ENCODE measurements at regions of chr5 and their contacts with region 1.

Region 1: DNA sequence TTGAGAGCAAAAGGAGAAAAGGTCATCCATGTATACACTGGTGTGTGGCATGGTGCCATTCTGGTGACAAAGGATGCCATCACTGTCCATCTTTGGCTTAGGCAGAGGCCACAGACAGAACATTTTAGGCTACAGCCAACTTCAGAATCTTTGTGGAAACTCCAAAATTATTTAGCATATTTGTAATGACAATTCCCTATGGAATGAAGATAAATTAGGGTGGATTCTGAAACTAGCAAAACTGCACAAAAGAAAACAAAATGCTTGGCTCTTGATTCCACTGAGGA is 92.5 kb downstream of the FBXW11 start:
- DNase-seq: no peak
- ATAC-seq: no peak
- H3K4me3 Mint-ChIP-seq: no peak overlapping the region
- H3K27ac Mint-ChIP-seq: peak overlapping the region; percentile 83
- H3K4me1 Mint-ChIP-seq: peaks cover 44% of the 10 kb centered on the region
- H3K27me3 Mint-ChIP-seq: no peaks in the 10 kb centered on the region

Region 2: GRCh38 chr5:171681677-171682076 is 232.3 kb before region 1 on chr5:
- CTCF ChIA-PET with region 1: no interaction called
- POLR2A ChIA-PET with region 1: no interaction called
- intact Hi-C with region 1: no loop called
- DNase-seq: no peak
- ATAC-seq: no peak
- H3K4me3 Mint-ChIP-seq: no peak overlapping the region
- H3K27ac Mint-ChIP-seq: no peak overlapping the region
- H3K4me1 Mint-ChIP-seq: no peaks in the 10 kb centered on the region
- H3K27me3 Mint-ChIP-seq: peaks cover 24% of the 10 kb centered on the region

Region 3: DNA sequence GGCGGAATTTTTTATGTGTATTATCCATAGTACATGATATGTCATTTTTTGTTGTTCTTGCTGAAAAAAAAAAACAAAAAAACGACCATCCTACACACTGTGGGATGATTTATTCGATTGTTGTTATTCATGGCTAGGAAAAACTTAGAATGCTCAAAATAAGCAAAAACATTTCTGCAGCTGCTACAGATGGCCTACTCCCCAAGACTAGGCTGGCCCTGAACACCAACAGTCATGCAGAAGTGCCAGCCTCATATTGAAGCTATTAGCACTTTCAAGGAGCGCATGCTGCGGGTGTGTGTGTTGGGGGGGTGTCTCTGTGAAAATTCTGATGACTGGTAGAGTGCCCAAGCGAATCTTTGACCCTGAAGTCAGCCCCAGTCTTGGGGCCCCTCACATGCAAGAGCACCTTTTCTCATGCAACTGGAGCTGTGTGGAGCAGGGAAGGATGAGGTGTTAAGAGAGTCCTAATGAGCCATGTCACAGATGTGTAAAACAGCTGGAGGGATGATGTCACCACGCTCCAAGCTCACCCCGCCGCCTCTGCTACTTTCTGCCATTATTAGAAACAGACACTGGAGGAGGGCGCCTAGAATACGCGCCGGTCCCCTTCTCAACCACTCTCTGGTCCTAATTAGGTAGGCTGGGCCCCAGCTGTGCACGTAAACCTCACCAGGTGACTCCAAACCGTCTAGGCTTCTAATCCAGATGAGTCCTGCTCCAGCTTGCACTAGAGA is 189.3 kb before region 1 on chr5:
- CTCF ChIA-PET with region 1: no interaction called
- POLR2A ChIA-PET with region 1: no interaction called
- intact Hi-C with region 1: no loop called
- DNase-seq: no peak
- ATAC-seq: no peak
- H3K4me3 Mint-ChIP-seq: no peak overlapping the region
- H3K27ac Mint-ChIP-seq: no peak overlapping the region
- H3K4me1 Mint-ChIP-seq: peaks cover 2% of the 10 kb centered on the region
- H3K27me3 Mint-ChIP-seq: peaks cover 15% of the 10 kb centered on the region

Region 4: GRCh38 chr5:171898386-171898785 is 15.5 kb before region 1 on chr5:
- CTCF ChIA-PET with region 1: interaction called, 16 read pairs
- POLR2A ChIA-PET with region 1: no interaction called
- intact Hi-C with region 1: no loop called
- DNase-seq: no peak
- ATAC-seq: no peak
- H3K4me3 Mint-ChIP-seq: no peak overlapping the region
- H3K27ac Mint-ChIP-seq: no peak overlapping the region
- H3K4me1 Mint-ChIP-seq: peaks cover 50% of the 10 kb centered on the region
- H3K27me3 Mint-ChIP-seq: no peaks in the 10 kb centered on the region

Region 5: GRCh38 chr5:171999877-172000276 is 85.9 kb after region 1 on chr5:
- CTCF ChIA-PET with region 1: interaction called, 57 read pairs
- POLR2A ChIA-PET with region 1: no interaction called
- intact Hi-C with region 1: loop called in 1 of 2 experiments (anchors 2 kb)
- DNase-seq: no peak
- ATAC-seq: no peak
- H3K4me3 Mint-ChIP-seq: no peak overlapping the region
- H3K27ac Mint-ChIP-seq: no peak overlapping the region
- H3K4me1 Mint-ChIP-seq: peaks cover 69% of the 10 kb centered on the region
- H3K27me3 Mint-ChIP-seq: no peaks in the 10 kb centered on the region

Region 6: DNA sequence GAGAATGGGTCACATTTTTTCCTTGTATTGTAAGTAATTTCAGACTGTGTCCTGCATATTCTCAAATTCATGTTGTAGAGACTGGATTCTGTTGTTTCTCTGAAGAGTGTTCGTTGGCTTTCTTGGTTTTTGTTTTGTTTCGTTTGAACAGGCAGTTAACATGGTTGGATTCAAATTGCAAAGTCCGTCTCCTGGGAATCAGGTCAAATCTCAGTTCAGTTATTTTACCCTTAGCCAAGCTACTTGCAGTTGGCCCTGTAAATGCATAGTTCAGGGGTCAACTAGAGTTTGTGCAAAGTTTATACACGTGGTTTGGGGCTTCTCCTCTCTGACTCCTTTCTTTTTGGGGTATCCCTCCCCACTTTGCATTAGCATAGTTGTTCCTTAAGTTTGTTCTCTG is 114.2 kb after region 1 on chr5:
- CTCF ChIA-PET with region 1: interaction called, 15 read pairs
- POLR2A ChIA-PET with region 1: no interaction called
- intact Hi-C with region 1: no loop called
- DNase-seq: no peak
- ATAC-seq: no peak
- H3K4me3 Mint-ChIP-seq: no peak overlapping the region
- H3K27ac Mint-ChIP-seq: no peak overlapping the region
- H3K4me1 Mint-ChIP-seq: no peaks in the 10 kb centered on the region
- H3K27me3 Mint-ChIP-seq: no peaks in the 10 kb centered on the region

Region 7: GRCh38 chr5:172044631-172045314 is 130.8 kb after region 1 on chr5:
- CTCF ChIA-PET with region 1: interaction called, 55 read pairs
- POLR2A ChIA-PET with region 1: no interaction called
- intact Hi-C with region 1: loop called (anchors 1 kb)
- DNase-seq: no peak
- ATAC-seq: no peak
- H3K4me3 Mint-ChIP-seq: no peak overlapping the region
- H3K27ac Mint-ChIP-seq: peak overlapping the region; percentile 21
- H3K4me1 Mint-ChIP-seq: peaks cover 19% of the 10 kb centered on the region
- H3K27me3 Mint-ChIP-seq: no peaks in the 10 kb centered on the region

Region 8: DNA sequence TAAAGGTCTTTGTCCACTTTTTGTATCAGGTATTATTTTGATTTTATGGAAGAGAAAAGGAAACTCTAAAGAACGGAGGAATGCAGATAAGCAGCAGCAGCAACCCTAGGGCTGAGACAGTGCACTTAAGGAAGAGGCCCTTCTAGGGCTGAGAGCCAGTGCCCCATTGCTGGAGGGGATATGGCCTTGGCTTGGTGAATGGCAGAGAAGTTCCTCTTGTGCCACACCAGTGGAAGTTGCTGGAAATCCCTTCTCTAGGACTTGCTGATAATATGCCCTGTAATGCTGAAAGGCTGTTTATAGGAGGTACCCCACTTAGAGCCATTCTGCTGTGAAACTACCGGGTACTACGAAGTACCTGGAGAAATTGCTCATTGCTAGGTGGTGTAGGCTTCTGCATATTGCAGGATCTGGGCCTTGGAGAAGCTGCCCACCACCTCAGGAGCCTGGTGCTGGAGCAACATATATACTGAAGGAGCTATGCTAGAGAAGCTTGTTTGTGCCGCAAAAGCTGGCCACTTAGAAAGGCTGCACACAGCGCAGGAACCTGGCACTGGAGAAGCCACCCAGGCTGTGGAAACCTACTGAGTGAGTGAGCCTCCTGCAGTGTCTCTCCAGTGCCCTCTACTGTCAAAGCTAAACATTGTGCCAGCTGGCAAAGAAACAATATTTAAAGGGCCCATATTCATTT is 379.3 kb after region 1 on chr5:
- CTCF ChIA-PET with region 1: interaction called, 3 read pairs
- POLR2A ChIA-PET with region 1: no interaction called
- intact Hi-C with region 1: loop called (anchors 2 to 5 kb)
- DNase-seq: peak; percentile 78
- ATAC-seq: peak; percentile 100
- H3K4me3 Mint-ChIP-seq: no peak overlapping the region
- H3K27ac Mint-ChIP-seq: no peak overlapping the region
- H3K4me1 Mint-ChIP-seq: peaks cover 2% of the 10 kb centered on the region
- H3K27me3 Mint-ChIP-seq: peaks cover 3% of the 10 kb centered on the region